Head of caudate nucleus (tissue), 42 donors: ENCODE measurements at regions of chr5 and their contacts with region 1.

Region 1: GRCh38 chr5:5492087-5492933 is 69.8 kb downstream of the ICE1 start:
- DNase-seq: peak in 17 of 42 donors; percentile 8 to 59 (median 35)

Region 2: DNA sequence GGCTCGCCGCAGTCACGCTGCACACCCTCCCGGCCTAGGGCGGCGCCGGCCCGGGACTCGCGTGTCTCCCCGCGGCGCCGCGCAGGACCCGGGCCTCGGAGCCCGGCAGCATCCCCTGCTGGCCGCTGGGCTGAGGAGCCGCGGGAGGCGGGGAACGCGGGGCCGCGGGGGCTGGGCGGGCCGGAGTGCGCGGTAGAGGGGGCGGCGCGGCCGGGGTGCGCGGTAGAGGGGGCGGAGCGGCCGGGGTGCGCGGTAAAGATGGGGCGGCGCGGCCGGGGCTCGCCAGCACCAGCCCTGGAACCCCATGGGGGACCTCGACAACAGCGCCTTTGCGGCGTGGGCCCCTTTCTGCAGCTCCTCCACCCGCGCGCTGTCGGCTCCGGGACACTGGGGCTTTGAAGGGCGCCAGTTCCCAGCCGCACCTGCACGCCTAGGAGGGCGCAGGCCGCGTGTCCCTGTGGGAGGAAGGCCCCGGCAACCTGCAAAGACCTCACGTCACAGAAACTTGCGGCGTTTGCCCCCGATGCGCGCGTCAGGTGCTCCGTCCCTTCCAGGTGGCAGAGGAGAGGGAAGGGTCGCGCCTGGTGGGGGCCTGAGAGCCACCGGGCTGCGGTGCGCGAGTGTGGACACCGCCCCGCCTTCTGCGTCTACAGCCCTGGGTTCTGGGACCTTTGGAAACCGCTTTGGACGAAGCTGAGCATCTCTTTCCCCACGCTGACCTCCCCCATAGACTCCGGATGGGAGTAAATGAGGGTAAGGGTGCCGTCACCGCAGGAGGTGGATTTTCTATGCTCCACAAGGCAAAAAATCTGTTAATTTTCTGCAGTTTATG is 1091.0 kb after region 1 on chr5:
- intact Hi-C with region 1: loop called (anchors 10 kb)
- DNase-seq: peak in 25 of 42 donors; percentile 7 to 60 (median 37)